Common myeloid progenitor, CD34-positive (primary cell): ENCODE measurements at regions of chr4 and their contacts with region 1.

Region 1: GRCh38 chr4:139484783-139485318 is 30.9 kb downstream of the RAB33B start:
- DNase-seq: peak in 2 of 3 donors; percentile 29 to 36
- H3K4me3 ChIP-seq: no peak overlapping the region
- H3K27ac ChIP-seq: no peak overlapping the region
- H3K4me1 ChIP-seq: peaks cover 0 to 2% (median 0%) of the 10 kb centered on the region in 4 experiments
- H3K27me3 ChIP-seq: no peaks in the 10 kb centered on the region

Region 2: DNA sequence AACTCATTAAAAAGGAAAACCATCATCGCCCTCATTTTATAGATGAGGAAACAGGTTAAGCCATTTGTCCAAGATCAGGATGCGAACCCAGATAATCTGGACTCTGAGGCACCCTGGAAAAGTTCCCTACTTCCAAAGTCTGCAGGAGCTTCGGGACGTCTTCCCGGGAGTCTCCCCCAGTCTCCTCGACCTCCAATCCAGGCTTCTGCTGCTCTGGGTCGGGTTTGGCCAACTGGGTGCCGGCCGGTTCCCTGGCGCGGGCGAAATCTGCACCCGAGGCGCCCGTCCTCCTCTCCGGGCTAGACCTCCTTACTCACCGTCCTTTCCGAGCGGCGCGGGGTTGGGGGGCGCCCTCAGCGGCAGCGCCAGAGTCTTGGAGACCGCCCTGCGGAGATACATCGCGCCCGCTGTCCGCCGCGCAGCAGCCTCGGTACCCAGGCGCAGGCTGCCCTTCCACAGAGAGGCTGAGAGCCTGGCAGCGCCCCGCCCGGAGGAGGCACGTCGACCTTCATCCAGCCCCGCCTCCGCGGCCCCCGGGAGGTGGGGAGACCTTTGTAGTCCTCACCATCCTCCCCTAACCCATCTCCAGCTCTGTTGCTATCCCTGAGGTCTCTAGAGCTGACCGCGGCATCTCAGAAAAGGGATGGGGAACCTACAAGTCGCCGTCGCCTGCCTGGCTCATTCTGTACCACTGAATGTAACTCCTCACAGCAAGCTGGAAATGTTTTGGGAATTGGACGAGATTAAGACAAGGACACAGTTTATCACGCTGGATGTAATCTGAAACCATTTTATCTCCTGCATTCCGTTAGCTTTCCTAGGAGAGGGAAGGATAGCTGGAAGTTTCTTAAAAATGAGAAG is 204.9 kb before region 1 on chr4 and contains the start of gene MGARP:
- CTCF ChIA-PET with region 1: no interaction called
- POLR2A ChIA-PET with region 1: no interaction called
- DNase-seq: peak in 2 of 3 donors; percentile 43 to 57
- H3K4me3 ChIP-seq: peak within 1 kb of the TSS; percentile 8 to 72 (median 58)
- H3K27ac ChIP-seq: no peak within 1 kb of the TSS
- H3K4me1 ChIP-seq: peaks cover 6 to 20% (median 13%) of the 10 kb centered on the region in 4 experiments
- H3K27me3 ChIP-seq: peaks cover 16 to 61% (median 20%) of the 10 kb centered on the region in 5 experiments

Region 3: GRCh38 chr4:139499026-139499585 is 14.3 kb after region 1 on chr4:
- CTCF ChIA-PET with region 1: interaction called, 19 read pairs
- POLR2A ChIA-PET with region 1: no interaction called
- DNase-seq: peak in 2 of 3 donors; percentile 19 to 23
- H3K4me3 ChIP-seq: no peak overlapping the region
- H3K27ac ChIP-seq: no peak overlapping the region
- H3K4me1 ChIP-seq: peaks cover 0 to 16% (median 8%) of the 10 kb centered on the region in 4 experiments
- H3K27me3 ChIP-seq: no peaks in the 10 kb centered on the region